GM23248 (cell line): ENCODE measurements at regions of chr2 and their contacts with region 1.

Region 1: DNA sequence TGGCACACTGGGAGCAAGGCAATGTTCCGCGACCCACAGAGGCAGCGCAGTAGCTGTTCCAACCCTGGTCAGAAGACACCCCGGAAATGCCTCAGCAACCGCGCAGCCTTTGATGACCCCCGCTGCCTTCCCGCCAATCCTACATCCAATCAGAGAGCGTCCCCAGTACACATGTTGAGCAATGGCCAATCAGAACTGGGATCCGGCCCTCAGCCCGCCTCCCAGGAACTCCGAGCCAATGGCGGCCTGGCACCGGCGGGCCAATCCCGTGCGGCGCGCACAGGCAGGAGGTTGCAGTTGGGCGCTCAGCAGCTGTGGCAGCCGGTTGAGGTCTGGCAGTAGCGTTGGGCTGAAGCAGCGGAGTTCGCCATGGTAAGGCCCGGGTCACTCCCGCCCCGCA is at the start of gene TUBA3D:
- DNase-seq: no peak
- H3K4me3 ChIP-seq: no peak within 1 kb of the TSS
- H3K27ac ChIP-seq: no peak within 1 kb of the TSS
- H3K4me1 ChIP-seq: no peaks in the 10 kb centered on the region
- H3K27me3 ChIP-seq: no peaks in the 10 kb centered on the region
- total RNA-seq, gene TUBA3D: not detected in 2 replicates

Region 2: DNA sequence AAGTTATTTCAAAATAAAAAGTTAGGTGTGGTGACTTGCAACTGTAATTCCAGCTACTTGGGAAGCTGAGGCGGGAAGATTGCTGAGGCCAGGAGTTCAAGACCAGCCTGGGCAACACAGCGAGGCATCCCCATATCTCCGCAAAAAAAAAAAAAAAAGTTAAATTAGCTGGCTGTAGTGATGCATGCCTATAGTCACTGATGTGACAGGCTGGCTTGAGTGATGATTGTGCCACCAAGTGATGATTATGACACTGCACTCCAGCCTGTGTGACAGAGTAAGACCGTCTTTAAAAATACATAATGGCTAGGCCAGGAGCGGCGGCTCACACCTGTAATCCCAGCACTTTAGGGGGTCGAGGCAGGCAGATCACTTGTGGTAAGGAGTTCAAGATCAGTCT is 1305.9 kb before region 1 on chr2:
- in situ Hi-C with region 1: no loop called
- DNase-seq: no peak
- H3K4me3 ChIP-seq: no peak overlapping the region
- H3K27ac ChIP-seq: no peak overlapping the region
- H3K4me1 ChIP-seq: no peaks in the 10 kb centered on the region
- H3K27me3 ChIP-seq: no peaks in the 10 kb centered on the region

Region 3: DNA sequence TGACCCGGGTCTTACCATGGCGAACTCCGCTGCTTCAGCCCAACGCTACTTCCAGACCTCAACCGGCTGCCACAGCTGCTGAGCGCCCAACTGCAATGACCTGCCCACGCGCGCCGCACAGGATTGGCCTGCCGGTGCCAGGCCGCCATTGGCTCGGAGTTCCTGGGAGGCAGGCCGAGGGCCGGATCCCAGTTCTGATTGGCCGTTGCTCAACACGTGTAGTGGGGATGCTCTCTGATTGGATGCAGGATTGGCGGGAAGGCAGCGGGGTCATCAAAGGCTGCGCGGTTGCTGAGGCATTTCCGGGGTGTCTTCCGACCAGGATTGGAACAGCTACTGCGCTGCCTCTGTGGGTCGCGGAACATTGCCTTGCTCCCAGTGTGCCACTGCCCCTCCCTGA is 1277.5 kb before region 1 on chr2 and contains the start of gene TUBA3E:
- in situ Hi-C with region 1: loop called (anchors 25 kb)
- DNase-seq: no peak
- H3K4me3 ChIP-seq: no peak within 1 kb of the TSS
- H3K27ac ChIP-seq: no peak within 1 kb of the TSS
- H3K4me1 ChIP-seq: no peaks in the 10 kb centered on the region
- H3K27me3 ChIP-seq: no peaks in the 10 kb centered on the region
- total RNA-seq, gene TUBA3E: not detected in 2 replicates

Region 4: GRCh38 chr2:131673392-131674173 is 197.8 kb after region 1 on chr2:
- in situ Hi-C with region 1: no loop called
- DNase-seq: peak; percentile 82
- H3K4me3 ChIP-seq: peak overlapping the region; percentile 25
- H3K27ac ChIP-seq: no peak overlapping the region
- H3K4me1 ChIP-seq: no peaks in the 10 kb centered on the region
- H3K27me3 ChIP-seq: no peaks in the 10 kb centered on the region; the same call in 1 of the 2 replicates